ENCODE measurements at regions of chr20 and their contacts with region 1.

Region 1: DNA sequence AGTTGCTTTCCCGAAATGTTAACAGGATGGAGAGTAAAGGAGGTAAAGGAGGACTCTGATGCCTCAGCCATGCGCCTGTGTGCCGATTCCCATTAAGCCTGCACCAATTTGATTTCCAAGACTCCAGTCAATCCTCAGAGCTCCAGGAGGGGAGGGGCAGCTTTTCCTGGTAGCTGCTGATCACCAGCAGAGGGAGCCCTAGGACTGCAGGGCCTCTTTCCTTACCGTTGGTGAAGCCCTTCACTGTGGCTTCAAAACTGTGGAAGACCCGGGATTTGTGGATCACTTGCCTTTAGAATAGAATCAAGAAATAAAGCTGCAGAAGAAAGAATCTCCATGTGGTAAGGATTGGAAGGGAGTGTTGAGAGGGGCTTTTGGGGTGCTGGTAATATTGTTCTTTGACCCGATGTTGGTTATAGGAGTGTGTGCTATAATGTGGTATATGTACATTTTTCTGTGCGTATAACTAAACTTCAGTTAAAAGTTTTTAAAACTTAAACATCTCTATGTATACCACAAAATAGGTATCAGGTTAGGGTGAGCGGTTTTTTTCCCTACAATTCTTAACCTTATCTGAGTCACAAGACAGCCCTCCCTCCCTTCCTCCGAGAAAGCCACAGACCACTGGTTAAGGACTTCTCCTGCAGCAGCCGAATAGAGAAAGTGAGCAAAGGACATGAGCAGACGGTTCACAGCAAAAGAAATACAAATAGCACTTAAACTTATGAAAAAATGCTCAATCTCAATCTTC is 6.9 kb upstream of the OSER1 start:
- DNase-seq: peak; percentile 65
- ATAC-seq: peak; percentile 82
- H3K4me3 ChIP-seq: no peak overlapping the region
- H3K27ac ChIP-seq: no peak overlapping the region
- H3K4me1 ChIP-seq: no peaks in the 10 kb centered on the region; a peak in 1 of 4 replicates
- H3K27me3 ChIP-seq: no peaks in the 10 kb centered on the region
- CTCF ChIP-seq: peak; percentile 93 to 99 (median 96)
- POLR2A ChIP-seq: no peak
- RAD21 ChIP-seq: peak; percentile 94

Region 2: GRCh38 chr20:44228465-44229258 is 11.1 kb after region 1 on chr20:
- CTCF ChIA-PET with region 1: interaction called, 10 read pairs
- POLR2A ChIA-PET with region 1: no interaction called
- RAD21 ChIA-PET with region 1: no interaction called
- intact Hi-C with region 1: no loop called
- DNase-seq: no peak
- ATAC-seq: 0 out of 2 replicates have a peak, but pooled peaks have one; percentile 47
- H3K4me3 ChIP-seq: no peak overlapping the region
- H3K27ac ChIP-seq: no peak overlapping the region
- H3K4me1 ChIP-seq: peaks cover 14 to 21% of the 10 kb centered on the region in 2 experiments
- H3K27me3 ChIP-seq: no peaks in the 10 kb centered on the region
- CTCF ChIP-seq: no peak; a peak in 1 of 6 replicates
- POLR2A ChIP-seq: no peak
- RAD21 ChIP-seq: no peak

Region 3: DNA sequence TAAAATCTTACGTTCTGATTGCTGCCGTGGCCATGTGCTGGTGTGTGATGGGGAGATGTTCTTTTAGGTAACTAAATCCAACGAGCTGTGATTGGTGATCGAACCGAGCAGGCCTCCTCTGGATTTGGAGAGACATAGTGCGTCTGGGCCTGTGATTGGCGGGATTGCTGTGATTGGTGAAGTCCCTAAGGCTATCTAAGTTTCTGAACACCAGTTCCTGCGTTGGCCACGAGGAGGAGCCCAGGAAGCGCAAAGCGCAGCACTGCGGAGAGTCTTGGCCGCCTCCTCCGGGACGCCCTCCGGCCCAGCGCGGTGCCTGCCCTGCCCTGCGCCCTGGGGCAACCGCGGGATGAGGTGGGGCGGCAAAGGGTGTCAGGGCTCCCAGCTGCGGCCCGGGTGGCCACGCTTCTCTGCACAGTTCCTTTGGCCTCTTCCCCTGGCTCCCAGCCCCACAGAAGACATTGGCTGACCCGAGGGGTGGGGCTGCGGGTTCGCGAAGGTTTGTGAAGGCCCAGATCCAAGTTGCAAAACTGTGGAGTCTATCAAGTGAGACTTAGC is 171.0 kb after region 1 on chr20:
- CTCF ChIA-PET with region 1: interaction called, 114 read pairs
- POLR2A ChIA-PET with region 1: interaction called, 5 read pairs
- RAD21 ChIA-PET with region 1: interaction called, 3 to 4 read pairs
- intact Hi-C with region 1: loop called (anchors 1 kb)
- DNase-seq: peak; percentile 88
- ATAC-seq: peak; percentile 94
- H3K4me3 ChIP-seq: no peak overlapping the region
- H3K27ac ChIP-seq: no peak overlapping the region
- H3K4me1 ChIP-seq: peaks cover 2 to 21% of the 10 kb centered on the region in 2 experiments; a peak in 2 of 4 replicates
- H3K27me3 ChIP-seq: no peaks in the 10 kb centered on the region
- CTCF ChIP-seq: peak; percentile 86 to 92 (median 89)
- POLR2A ChIP-seq: no peak
- RAD21 ChIP-seq: peak; percentile 99

Region 4: DNA sequence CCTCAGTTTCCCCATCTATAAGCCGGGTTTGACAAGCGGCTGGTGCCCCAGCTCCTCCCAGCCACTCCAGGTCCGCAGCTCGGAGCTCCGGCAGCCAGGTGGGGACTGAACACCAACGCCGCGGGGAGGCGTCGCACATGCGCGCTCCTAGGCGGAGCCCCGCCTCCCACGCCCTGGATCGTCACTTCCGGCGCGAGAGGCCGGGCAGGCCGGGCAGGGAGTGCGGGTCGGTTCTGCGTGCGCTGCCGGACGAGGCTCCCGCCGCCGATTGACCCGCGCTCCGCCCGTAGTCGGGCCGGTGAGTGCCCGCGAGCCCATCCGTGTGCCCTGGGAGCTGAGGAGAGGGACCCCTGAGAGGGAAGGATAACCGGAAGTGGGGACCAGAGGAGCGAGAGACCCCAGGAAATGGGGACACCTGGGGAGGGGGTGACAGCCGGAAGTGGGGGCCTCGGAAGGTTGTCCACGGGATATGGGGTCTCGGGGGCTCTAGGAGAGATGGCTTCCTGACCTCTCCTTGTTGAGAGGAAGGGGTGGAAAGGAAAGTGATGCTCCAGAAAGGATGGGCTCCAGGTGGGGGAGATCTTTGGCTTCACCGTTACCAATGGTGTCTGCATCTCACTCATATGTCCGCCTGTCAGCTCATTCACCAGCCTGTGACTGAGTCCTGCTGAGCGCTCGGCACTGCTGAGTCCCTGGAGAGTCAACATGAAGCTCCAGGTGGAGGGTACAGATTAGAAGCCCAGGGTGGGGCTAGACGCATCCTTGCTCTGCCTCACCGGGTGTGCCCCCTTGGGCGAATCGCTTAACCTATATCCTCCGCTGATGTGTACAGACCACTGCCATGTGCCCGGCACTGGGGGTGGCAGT is 258.4 kb after region 1 on chr20 and contains the start of gene TTPAL:
- CTCF ChIA-PET with region 1: interaction called, 22 read pairs
- POLR2A ChIA-PET with region 1: interaction called, 3 read pairs
- RAD21 ChIA-PET with region 1: interaction called, 3 read pairs
- intact Hi-C with region 1: no loop called
- DNase-seq: peak; percentile 73
- ATAC-seq: peak; percentile 97
- H3K4me3 ChIP-seq: peak within 1 kb of the TSS; percentile 77 to 94
- H3K27ac ChIP-seq: peak within 1 kb of the TSS; percentile 59
- H3K4me1 ChIP-seq: peaks cover 3 to 20% of the 10 kb centered on the region in 2 experiments; a peak in 2 of 4 replicates
- H3K27me3 ChIP-seq: no peaks in the 10 kb centered on the region
- CTCF ChIP-seq: peak in 1 of 3 experiments; percentile 26; a peak in 1 of 6 replicates
- POLR2A ChIP-seq: peak; percentile 94
- RAD21 ChIP-seq: peak; percentile 46
- total RNA-seq, gene TTPAL: 20.4 TPM

Region 5: DNA sequence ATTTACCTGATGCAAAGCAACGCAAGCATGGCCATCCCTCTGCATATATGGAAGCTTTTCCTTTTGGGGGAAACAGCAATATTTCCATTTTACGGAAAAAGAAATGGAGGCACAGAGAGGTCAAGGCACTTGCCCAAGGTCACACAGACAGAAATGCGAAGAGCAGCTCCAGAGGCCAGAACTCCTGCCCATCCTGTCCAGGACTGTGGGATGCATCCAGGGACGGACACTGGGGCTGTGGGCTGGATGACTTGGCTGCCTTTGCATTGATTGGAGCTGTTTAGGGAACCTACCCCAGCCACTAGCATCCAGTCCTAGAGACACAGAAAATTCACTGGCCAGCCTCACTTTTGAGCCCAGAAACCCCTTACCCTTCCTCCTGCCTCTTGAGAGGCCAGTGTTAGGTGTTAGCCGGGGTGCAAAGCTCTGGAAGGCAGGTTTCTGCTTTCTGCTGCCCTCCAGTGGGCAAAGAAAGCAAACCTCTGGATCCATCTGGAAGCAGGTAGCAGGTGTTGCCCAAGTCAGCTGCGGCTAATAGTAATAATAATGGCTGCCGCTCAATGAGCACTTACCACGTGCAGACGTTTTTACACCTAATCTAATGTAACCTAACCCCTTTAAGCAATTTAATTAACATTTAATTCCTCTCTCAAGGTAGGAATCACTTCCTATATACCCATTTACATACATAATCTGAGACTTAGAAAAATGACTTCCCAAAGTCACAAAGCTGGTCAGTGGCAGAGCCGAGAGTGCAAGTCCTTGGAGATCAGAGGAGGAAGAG is 465.9 kb after region 1 on chr20:
- CTCF ChIA-PET with region 1: interaction called, 8 read pairs
- POLR2A ChIA-PET with region 1: no interaction called
- RAD21 ChIA-PET with region 1: no interaction called
- intact Hi-C with region 1: loop called (anchors 2 kb)
- DNase-seq: peak; percentile 59
- ATAC-seq: peak; percentile 91
- H3K4me3 ChIP-seq: no peak overlapping the region
- H3K27ac ChIP-seq: no peak overlapping the region
- H3K4me1 ChIP-seq: peaks cover 3 to 22% of the 10 kb centered on the region in 2 experiments
- H3K27me3 ChIP-seq: no peaks in the 10 kb centered on the region
- CTCF ChIP-seq: peak; percentile 63 to 79 (median 77); a peak in 5 of 6 replicates
- POLR2A ChIP-seq: no peak
- RAD21 ChIP-seq: peak; percentile 79

Region 6: DNA sequence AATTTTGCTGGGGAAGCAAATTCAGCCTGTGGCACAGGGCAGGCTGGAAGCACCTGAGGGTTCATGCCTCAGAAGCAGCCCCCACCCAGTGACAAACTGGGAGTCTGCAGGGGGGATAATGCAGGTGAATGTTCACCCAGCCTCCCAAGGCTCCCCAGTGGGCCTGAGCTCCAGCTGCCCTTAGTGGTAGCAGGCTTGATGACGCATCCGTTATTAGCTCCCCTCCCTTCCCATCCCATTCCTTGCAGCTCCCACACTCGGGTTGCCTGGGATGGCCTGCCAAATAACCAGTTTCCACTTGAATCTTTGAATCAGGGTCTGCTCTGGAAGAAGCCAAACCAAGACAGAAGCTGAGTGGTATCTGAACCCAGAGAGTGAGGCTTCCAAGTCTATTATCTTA is 543.9 kb after region 1 on chr20:
- CTCF ChIA-PET with region 1: no interaction called
- POLR2A ChIA-PET with region 1: no interaction called
- RAD21 ChIA-PET with region 1: no interaction called
- intact Hi-C with region 1: no loop called
- DNase-seq: no peak
- ATAC-seq: no peak
- H3K4me3 ChIP-seq: no peak overlapping the region
- H3K27ac ChIP-seq: no peak overlapping the region
- H3K4me1 ChIP-seq: 0 out of 4 replicates have a peak, but pooled peaks cover 0 to 8% of the 10 kb centered on the region in 2 experiments
- H3K27me3 ChIP-seq: peaks cover 16% of the 10 kb centered on the region
- CTCF ChIP-seq: no peak
- POLR2A ChIP-seq: no peak
- RAD21 ChIP-seq: no peak

Measured in HCT116 (cell line).